Activated CD4-positive, alpha-beta T cell treated with anti-CD3 and anti-CD28 coated beads, Interleukin-2, amount 10 ng/mL, durations not matched to agents 7 days and 5 days (primary cell): ENCODE measurements at regions of chr1 and their contacts with region 1.

Region 1: GRCh38 chr1:45359882-45360513 is 19.8 kb upstream of the MUTYH start:
- DNase-seq: peak; percentile 66
- H3K4me3 Mint-ChIP-seq: no peak overlapping the region
- H3K27ac Mint-ChIP-seq: no peak overlapping the region
- H3K4me1 Mint-ChIP-seq: peaks cover 6% of the 10 kb centered on the region
- H3K27me3 Mint-ChIP-seq: no peaks in the 10 kb centered on the region

Region 2: DNA sequence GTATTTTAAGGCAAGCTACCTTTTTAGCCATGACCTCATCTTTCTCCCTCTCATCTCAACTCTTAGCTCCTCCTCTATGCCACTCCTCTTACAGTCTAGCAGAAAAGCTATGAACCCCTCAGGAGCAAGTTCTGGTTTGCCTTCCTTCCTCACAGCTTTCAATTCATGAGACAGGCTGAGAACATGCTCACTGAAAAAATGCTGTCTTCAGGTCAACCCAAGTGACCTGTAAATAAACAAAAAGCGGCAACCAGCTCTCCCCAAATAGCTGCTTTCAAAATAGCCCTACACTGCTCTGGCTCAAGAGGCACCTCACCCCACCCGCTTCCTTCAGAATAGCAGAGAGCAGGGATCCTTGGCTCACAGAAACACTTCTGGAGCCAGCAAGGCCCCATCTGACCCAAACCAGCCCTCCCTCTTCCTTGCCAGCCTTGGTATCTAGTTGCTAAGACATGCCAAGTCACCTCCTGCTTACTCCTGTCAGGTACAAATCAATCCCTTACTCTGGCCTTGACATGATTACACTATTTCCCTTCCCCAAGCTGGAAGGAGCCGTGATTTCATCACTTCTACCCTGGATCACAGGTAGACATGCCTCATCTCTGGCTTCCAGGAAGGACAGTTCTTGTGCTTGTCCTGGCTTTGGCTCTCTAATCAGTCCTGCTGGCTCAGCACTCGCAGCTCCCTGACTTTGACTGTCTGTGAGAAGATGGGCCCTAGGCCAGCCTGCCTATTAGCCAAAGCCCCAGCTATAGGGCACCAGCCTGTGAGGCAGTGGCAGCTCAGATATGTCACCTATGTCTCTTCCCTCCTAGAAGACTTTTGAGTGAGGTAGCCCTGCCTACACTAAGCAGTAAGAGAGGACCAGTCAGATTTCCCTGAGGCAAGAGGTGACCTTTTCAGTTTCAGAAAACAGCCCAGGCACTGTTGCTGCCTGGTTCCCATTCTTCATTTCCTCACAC is 11.0 kb before region 1 on chr1:
- CTCF ChIA-PET with region 1: interaction called, 13 read pairs
- POLR2A ChIA-PET with region 1: no interaction called
- DNase-seq: no peak
- H3K4me3 Mint-ChIP-seq: no peak overlapping the region
- H3K27ac Mint-ChIP-seq: no peak overlapping the region
- H3K4me1 Mint-ChIP-seq: peaks cover 7% of the 10 kb centered on the region
- H3K27me3 Mint-ChIP-seq: no peaks in the 10 kb centered on the region

Region 3: GRCh38 chr1:45490626-45491486 is 130.9 kb after region 1 on chr1 and contains the start of gene TESK2:
- CTCF ChIA-PET with region 1: interaction called, 19 read pairs
- POLR2A ChIA-PET with region 1: interaction called, 5 read pairs
- DNase-seq: peak; percentile 98
- H3K4me3 Mint-ChIP-seq: no peak within 1 kb of the TSS
- H3K27ac Mint-ChIP-seq: no peak within 1 kb of the TSS
- H3K4me1 Mint-ChIP-seq: peaks cover 13% of the 10 kb centered on the region
- H3K27me3 Mint-ChIP-seq: peaks cover 3% of the 10 kb centered on the region
- total RNA-seq, gene TESK2: 2.6 to 3.5 TPM

Region 4: DNA sequence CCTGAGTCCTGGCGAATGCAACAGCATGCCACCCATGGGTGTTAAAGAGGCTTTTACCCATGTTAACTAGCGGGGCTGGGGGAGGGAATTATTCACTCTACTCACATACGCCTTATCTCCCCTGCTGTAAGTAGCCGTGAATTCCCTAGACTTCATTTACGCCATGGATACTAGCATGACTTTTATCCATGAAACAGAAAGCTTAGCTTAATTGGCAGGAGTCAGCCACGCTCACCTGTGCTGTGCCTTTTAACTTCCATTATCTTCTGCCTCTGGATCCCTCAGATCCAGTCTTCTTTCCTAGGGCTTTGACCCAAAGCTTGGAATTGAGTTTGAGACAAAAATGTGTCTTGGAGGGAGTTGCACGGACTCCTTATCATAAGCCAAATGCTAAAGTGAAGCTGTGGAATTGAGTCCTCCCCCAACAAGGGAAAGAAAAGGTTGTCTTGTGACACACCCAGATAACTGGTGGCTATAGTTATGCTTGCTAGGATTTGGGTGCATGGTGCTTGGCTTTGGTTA is 214.2 kb after region 1 on chr1:
- CTCF ChIA-PET with region 1: no interaction called
- POLR2A ChIA-PET with region 1: no interaction called
- DNase-seq: no peak
- H3K4me3 Mint-ChIP-seq: no peak overlapping the region
- H3K27ac Mint-ChIP-seq: no peak overlapping the region
- H3K4me1 Mint-ChIP-seq: no peaks in the 10 kb centered on the region
- H3K27me3 Mint-ChIP-seq: no peaks in the 10 kb centered on the region